ENCODE measurements at regions of chr5 and their contacts with region 1.

Region 1: DNA sequence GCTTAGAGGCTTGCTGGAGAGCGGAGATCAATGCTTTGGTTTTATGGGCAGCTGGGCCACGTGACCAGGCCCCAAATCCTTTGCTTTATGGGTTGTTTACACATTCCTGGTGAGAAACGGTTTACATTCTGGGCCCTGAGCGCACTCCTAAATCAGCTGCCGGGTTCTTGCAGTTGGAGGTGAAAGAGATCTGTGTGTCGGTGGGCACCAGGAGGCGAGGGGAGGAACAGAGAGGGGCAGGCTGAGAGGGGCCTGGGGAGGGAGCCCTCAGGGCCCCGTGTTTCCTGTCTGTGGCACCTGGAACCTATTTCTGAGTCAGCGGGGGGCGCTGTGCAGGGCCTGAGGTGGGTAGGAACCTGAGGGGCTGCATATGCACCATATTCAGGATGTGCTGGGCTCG is 63.5 kb upstream of the HAND1 start:
- DNase-seq: no peak
- ATAC-seq: no peak
- H3K4me3 ChIP-seq: no peak overlapping the region
- H3K4me3 Mint-ChIP-seq: no peak overlapping the region
- H3K27ac ChIP-seq: no peak overlapping the region
- H3K27ac Mint-ChIP-seq: no peak overlapping the region
- H3K4me1 ChIP-seq: no peaks in the 10 kb centered on the region
- H3K4me1 Mint-ChIP-seq: no peaks in the 10 kb centered on the region
- H3K27me3 ChIP-seq: no peaks in the 10 kb centered on the region
- H3K27me3 Mint-ChIP-seq: peaks cover 10% of the 10 kb centered on the region
- CTCF ChIP-seq: no peak

Region 2: DNA sequence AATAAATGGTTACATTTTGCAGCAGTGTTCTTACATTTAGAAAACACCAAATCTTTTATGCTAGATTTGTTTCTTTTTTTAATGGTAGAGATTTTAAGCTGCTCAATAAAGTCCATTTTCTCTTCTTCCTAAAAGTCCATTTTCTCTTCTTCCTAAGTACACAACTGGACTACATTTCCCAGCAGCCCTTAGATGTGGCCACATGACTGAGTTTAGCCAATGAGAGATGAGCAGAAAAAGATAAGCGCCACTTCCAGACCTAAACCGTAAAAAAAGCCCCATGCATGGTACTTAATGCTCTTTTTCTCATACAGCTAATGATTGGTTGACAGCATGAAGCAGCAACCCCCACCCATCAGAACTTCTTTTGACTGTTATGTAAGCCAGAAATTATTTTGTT is 709.6 kb before region 1 on chr5:
- CTCF ChIA-PET with region 1: no interaction called
- POLR2A ChIA-PET with region 1: no interaction called
- intact Hi-C with region 1: no loop called
- DNase-seq: peak in 1 of 9 experiments; percentile 20
- ATAC-seq: no peak
- H3K4me3 ChIP-seq: no peak overlapping the region
- H3K4me3 Mint-ChIP-seq: no peak overlapping the region
- H3K27ac ChIP-seq: no peak overlapping the region
- H3K27ac Mint-ChIP-seq: no peak overlapping the region
- H3K4me1 ChIP-seq: no peaks in the 10 kb centered on the region
- H3K4me1 Mint-ChIP-seq: no peaks in the 10 kb centered on the region
- H3K27me3 ChIP-seq: no peaks in the 10 kb centered on the region
- H3K27me3 Mint-ChIP-seq: peaks cover 5% of the 10 kb centered on the region
- CTCF ChIP-seq: no peak

Region 3: GRCh38 chr5:154503698-154504039 is 37.9 kb before region 1 on chr5:
- CTCF ChIA-PET with region 1: no interaction called
- POLR2A ChIA-PET with region 1: no interaction called
- intact Hi-C with region 1: loop called in 1 of 2 experiments (anchors 1 kb)
- DNase-seq: no peak
- ATAC-seq: no peak
- H3K4me3 ChIP-seq: peak overlapping the region in 1 of 2 experiments; percentile 3
- H3K4me3 Mint-ChIP-seq: no peak overlapping the region
- H3K27ac ChIP-seq: no peak overlapping the region
- H3K27ac Mint-ChIP-seq: no peak overlapping the region
- H3K4me1 ChIP-seq: no peaks in the 10 kb centered on the region
- H3K4me1 Mint-ChIP-seq: no peaks in the 10 kb centered on the region
- H3K27me3 ChIP-seq: no peaks in the 10 kb centered on the region
- H3K27me3 Mint-ChIP-seq: peaks cover 23% of the 10 kb centered on the region
- CTCF ChIP-seq: no peak

Measured in CD8-positive, alpha-beta T cell (primary cell).